ENCODE measurements at regions of chr5 and their contacts with region 1.

Region 1: GRCh38 chr5:139633295-139634027 is 14.7 kb upstream of the CXXC5 start:
- DNase-seq: peak; percentile 52 to 66 (median 64)
- H3K4me3 ChIP-seq: no peak overlapping the region
- H3K4me3 Mint-ChIP-seq: peak overlapping the region in 1 of 8 donors; percentile 4
- H3K27ac ChIP-seq: no peak overlapping the region
- H3K27ac Mint-ChIP-seq: peak overlapping the region in 6 of 7 donors; percentile 1 to 84 (median 28)
- H3K4me1 ChIP-seq: peaks cover 24% of the 10 kb centered on the region
- H3K4me1 Mint-ChIP-seq: peaks cover 22 to 42% (median 34%) of the 10 kb centered on the region in 4 donors
- H3K27me3 ChIP-seq: no peaks in the 10 kb centered on the region
- H3K27me3 Mint-ChIP-seq: no peaks in the 10 kb centered on the region

Region 2: DNA sequence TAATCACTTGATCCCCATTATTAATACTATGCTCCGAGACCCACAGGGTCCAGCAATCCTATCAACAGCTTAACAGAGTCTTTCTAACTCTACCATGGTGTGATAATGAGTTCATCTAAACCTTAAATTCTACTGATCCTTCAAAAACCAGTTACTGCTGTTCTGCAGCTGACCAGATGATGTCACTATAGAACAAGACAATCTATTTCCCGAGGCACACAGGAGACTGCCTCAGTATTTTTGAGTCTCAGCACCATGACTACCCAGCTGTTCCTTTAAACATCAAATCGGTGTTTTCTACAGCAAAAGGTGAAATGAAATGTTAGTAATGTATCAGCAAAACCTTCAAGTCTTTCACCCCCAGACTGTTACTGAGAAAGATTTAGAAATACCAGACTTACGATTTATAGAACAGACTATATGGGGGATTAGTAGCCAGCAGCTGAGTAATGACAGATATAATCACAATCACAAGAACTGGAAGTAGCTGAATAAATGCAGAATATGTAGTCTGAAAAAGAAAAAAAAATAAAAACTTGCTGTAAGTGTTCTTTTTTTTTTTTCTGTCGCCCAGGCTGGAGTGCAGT is 211.1 kb before region 1 on chr5:
- CTCF ChIA-PET with region 1: interaction called, 9 read pairs
- POLR2A ChIA-PET with region 1: interaction called, 3 read pairs
- intact Hi-C with region 1: loop called (anchors 5 kb)
- DNase-seq: peak; percentile 76 to 81 (median 79)
- H3K4me3 ChIP-seq: no peak overlapping the region
- H3K4me3 Mint-ChIP-seq: no peak overlapping the region
- H3K27ac ChIP-seq: no peak overlapping the region
- H3K27ac Mint-ChIP-seq: peak overlapping the region in 6 of 7 donors; percentile 14 to 77 (median 50)
- H3K4me1 ChIP-seq: peaks cover 3% of the 10 kb centered on the region
- H3K4me1 Mint-ChIP-seq: peaks cover 5 to 6% (median 6%) of the 10 kb centered on the region in 4 donors
- H3K27me3 ChIP-seq: no peaks in the 10 kb centered on the region
- H3K27me3 Mint-ChIP-seq: no peaks in the 10 kb centered on the region

Region 3: DNA sequence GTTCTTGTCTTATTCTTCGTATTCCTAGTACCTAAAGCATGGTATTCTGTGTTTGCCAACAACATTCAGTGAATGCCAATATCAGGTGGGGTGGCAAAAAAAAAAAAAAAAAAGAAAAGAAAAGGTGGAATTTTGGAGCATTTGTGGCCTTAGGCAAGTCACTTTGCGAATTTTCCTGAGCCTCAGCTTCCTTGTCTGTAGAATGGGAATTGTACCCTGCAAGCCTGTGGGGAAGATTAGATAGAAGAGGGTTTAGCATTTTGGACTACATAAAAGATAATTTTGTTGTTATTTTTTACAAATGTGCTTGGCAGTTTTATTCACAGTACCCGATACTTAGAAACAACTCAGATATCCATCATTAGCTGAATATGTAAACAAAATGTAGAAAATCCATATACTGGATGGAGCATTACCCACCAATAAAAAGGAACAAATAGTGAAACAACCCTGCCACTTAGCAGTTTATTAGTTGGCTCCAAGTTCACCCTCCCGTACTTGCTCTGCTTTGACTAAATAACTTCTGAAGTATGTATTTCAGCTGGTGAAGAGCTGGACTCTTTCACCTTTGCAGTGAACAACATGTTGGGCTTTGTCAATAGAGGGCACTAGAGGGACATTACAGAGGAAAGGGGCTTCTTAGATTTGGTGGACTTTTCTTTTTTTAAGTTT is 58.7 kb before region 1 on chr5:
- CTCF ChIA-PET with region 1: interaction called, 63 read pairs
- POLR2A ChIA-PET with region 1: interaction called, 4 read pairs
- intact Hi-C with region 1: loop called (anchors 1 kb)
- DNase-seq: peak in 4 of 5 donors; percentile 37 to 45 (median 40)
- H3K4me3 ChIP-seq: no peak overlapping the region
- H3K4me3 Mint-ChIP-seq: peak overlapping the region in 6 of 8 donors; percentile 5 to 67 (median 44)
- H3K27ac ChIP-seq: peak overlapping the region; percentile 45
- H3K27ac Mint-ChIP-seq: peak overlapping the region; percentile 7 to 84 (median 64)
- H3K4me1 ChIP-seq: peaks cover 75% of the 10 kb centered on the region
- H3K4me1 Mint-ChIP-seq: peaks cover 54 to 78% (median 67%) of the 10 kb centered on the region in 4 donors
- H3K27me3 ChIP-seq: no peaks in the 10 kb centered on the region
- H3K27me3 Mint-ChIP-seq: no peaks in the 10 kb centered on the region

Region 4: DNA sequence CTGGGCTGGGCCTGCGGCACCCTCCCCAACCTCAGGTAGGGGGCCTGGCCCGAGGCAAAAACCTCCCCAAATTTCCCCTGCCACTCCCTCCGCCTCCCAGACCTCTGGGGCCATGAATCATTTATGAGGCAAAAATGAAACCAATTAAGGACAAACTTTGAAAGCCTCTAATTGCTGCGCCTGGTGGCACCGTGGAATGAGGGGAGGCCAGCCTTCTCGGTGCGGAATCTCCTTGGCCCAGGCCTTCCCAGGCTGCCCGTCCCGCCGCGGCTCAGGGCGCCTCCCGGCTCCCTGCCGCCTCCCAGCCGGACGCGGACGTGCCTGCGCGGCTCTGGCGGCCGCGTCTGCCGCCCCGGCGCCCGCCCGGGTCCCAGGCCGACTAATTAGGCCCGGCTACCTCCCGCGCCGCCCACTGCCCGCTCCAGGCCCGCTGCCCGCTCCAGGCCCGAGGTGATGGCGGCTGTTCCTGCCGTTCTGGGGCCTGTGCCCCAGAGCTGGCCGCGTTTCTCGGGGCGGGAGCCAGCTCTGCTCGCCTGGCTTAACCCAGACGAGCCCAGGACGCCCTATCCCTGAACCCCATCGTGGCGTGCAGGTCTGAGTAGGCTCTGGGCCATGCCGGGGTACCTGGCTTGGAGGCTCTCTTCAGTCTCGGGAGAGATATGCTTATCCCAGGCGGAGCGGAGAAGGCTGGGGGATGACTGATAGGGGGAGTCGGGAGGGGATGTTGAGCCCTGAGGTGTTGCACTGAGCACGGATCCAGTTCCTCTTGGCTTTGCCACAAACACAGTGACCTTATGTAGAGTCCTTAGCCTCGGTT is 34.8 kb after region 1 on chr5:
- CTCF ChIA-PET with region 1: interaction called, 16 read pairs
- POLR2A ChIA-PET with region 1: no interaction called
- intact Hi-C with region 1: no loop called
- DNase-seq: peak; percentile 29 to 58 (median 39)
- H3K4me3 ChIP-seq: peak overlapping the region; percentile 47 to 64
- H3K4me3 Mint-ChIP-seq: peak overlapping the region; percentile 75 to 88 (median 82)
- H3K27ac ChIP-seq: peak overlapping the region; percentile 46
- H3K27ac Mint-ChIP-seq: peak overlapping the region in 6 of 7 donors; percentile 49 to 80 (median 56)
- H3K4me1 ChIP-seq: peaks cover 43% of the 10 kb centered on the region
- H3K4me1 Mint-ChIP-seq: peaks cover 14 to 50% (median 31%) of the 10 kb centered on the region in 4 donors
- H3K27me3 ChIP-seq: no peaks in the 10 kb centered on the region
- H3K27me3 Mint-ChIP-seq: no peaks in the 10 kb centered on the region

Region 5: DNA sequence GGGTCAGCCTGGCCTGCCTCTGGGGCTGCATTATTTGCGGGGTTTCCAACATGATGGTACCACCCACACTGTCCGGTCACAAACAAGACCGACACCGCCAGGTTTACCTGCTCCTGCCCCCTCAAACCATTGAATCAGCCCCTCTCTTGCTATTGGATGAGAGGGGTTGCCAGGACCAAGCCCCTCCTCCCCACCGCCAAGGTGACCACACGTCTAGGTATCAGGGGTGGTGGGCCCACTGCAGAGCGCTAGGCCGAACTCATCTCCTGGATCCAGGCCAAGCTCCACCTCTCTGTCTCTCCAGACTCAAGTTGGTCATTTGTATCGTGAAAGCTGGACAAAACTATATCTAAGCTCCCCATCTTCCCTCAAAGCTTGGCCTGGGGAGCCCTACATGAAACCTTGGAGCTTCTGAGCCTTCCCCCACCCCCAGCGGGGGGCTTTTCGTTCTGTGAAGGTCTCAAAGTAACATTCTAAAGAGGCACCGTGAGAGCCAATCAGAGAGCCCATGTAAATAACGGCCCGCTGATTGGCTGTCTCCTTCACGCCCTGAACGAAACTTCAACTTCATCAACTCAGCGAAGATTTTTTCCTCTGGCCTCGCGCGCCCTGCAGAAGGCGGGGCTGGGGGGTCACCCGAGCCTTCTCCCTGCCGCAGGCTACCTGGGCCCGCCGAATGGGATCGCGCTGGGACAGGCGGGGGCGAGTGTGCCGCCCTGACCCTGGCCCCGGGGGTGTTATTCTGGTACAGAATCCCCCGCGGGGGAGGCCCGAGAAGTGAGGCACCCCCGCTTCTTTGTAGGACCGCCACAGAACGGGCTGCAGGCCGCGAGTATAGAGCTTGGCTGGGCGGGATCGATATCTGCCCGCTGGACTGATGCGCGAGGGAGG is 112.6 kb after region 1 on chr5:
- CTCF ChIA-PET with region 1: interaction called, 5 read pairs
- POLR2A ChIA-PET with region 1: no interaction called
- intact Hi-C with region 1: loop called (anchors 5 kb)
- DNase-seq: peak; percentile 35 to 59 (median 45)
- H3K4me3 ChIP-seq: peak overlapping the region in 1 of 2 donors; percentile 60
- H3K4me3 Mint-ChIP-seq: peak overlapping the region; percentile 82 to 97 (median 90)
- H3K27ac ChIP-seq: no peak overlapping the region
- H3K27ac Mint-ChIP-seq: peak overlapping the region in 4 of 7 donors; percentile 15 to 68 (median 46)
- H3K4me1 ChIP-seq: peaks cover 19% of the 10 kb centered on the region
- H3K4me1 Mint-ChIP-seq: peaks cover 12 to 41% (median 18%) of the 10 kb centered on the region in 4 donors
- H3K27me3 ChIP-seq: no peaks in the 10 kb centered on the region
- H3K27me3 Mint-ChIP-seq: peaks cover 8 to 14% of the 10 kb centered on the region in 2 donors

Measured in CD4-positive, alpha-beta memory T cell (primary cell).